SK-N-SH (cell line): ENCODE measurements at regions of chr7 and their contacts with region 1.

Region 1: GRCh38 chr7:8549046-8549445 is 115.6 kb downstream of the NXPH1 start:
- DNase-seq: no peak
- H3K4me3 ChIP-seq: no peak overlapping the region
- H3K27ac ChIP-seq: peak overlapping the region in 1 of 2 experiments; percentile 16; a peak in 2 of 4 replicates
- H3K4me1 ChIP-seq: peaks cover 0 to 24% of the 10 kb centered on the region in 2 experiments; a peak in 2 of 4 replicates
- H3K27me3 ChIP-seq: no peaks in the 10 kb centered on the region
- CTCF ChIP-seq: no peak
- EP300 ChIP-seq: peak in 1 of 2 experiments; percentile 89; a peak in 2 of 4 replicates
- RAD21 ChIP-seq: peak; percentile 13; the same call in 1 of the 2 replicates

Region 2: GRCh38 chr7:8560501-8560900 is 11.5 kb after region 1 on chr7:
- CTCF ChIA-PET with region 1: interaction called, 10 read pairs
- POLR2A ChIA-PET with region 1: no interaction called
- DNase-seq: no peak
- H3K4me3 ChIP-seq: no peak overlapping the region
- H3K27ac ChIP-seq: no peak overlapping the region
- H3K4me1 ChIP-seq: no peaks in the 10 kb centered on the region; a peak in 1 of 4 replicates
- H3K27me3 ChIP-seq: no peaks in the 10 kb centered on the region
- CTCF ChIP-seq: no peak
- EP300 ChIP-seq: no peak
- RAD21 ChIP-seq: no peak

Region 3: GRCh38 chr7:8841171-8841570 is 292.1 kb after region 1 on chr7:
- CTCF ChIA-PET with region 1: no interaction called
- POLR2A ChIA-PET with region 1: no interaction called
- DNase-seq: no peak
- H3K4me3 ChIP-seq: no peak overlapping the region
- H3K27ac ChIP-seq: no peak overlapping the region
- H3K4me1 ChIP-seq: no peaks in the 10 kb centered on the region
- H3K27me3 ChIP-seq: no peaks in the 10 kb centered on the region
- CTCF ChIP-seq: no peak
- EP300 ChIP-seq: no peak
- RAD21 ChIP-seq: no peak